Right ventricle myocardium inferior (tissue), 1 donor: ENCODE measurements at regions of chr1 and their contacts with region 1.

Region 1: DNA sequence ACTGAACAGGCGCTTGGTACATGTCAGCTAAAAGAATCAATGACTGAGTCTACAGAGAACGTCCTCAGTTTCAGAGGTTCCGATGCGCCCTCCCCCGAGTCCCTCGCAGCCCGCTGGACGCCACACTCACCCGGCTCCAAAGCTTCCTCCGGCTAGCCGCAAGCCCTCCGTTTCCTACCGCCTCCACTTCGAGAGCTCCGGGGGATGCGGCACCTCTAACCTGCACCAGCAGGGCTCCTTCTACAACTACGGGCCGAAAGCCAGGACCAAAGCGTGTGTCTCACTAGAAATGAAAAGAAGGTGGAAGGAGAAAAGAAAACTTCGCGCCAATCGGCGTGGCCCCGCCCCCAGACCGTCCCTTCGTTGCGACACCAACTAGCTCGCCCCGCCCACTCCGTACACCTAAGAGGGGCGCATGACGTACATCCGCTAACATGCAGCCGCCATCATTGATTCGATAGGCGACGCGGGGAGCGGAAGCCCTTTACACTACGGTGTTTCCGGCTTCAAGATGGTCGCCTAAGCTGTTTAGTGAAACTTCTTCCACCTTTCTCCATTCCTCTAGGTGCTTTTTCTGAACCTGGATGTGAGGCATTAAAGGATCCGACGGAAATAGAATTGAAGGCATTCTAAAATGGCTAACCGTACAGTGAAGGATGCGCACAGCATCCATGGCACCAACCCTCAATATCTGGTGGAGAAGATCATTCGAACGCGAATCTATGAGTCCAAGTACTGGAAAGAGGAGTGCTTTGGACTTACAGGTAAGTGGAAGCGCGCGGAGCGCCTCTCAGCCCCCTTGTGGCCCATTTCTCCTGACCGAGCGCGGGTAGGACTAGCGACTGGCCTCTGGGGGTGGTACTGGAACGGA is at the starts of genes ORC1 and PRPF38A:
- DNase-seq: peak; percentile 99
- ATAC-seq: peak; percentile 100
- total RNA-seq, gene ORC1: 0.46 TPM
- total RNA-seq, gene PRPF38A: 18.9 TPM

Region 2: DNA sequence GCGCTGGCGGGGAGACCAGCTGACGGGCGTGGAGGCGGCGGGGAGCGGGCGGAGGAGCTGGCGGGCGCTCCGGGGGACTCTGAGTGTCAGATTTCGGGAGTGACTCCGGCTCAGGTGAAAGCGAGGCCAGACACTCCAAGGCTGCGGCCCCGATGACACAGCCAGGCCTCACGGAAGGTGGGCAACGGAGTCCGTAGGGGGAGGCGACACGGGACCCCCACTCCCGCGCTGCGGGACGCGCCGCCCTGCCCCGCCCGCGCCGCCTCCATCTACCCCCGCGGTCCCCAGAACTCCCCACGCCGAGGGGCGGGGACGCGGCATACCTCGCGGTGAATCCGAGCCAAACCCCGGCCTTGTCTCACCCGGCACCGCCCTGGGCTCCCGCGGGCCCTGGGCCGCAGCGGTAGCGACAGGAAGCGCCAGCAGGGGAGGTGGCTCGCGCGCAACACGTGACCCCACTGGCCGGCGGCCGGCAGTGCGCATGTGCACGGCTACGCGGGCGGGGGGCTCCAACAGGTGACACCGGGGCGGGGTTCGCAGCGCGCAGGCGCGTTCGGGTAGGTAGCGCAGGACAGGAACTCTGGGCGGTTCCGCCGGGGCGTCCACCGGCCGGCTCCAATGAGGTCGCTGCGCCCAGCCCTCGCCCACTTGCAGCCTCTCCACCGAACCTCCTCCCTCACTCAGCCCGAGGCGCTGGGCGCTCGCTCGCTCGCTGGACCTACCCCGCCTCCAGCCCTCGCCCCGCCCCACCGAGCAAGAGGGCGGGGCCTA is 38.4 kb before region 1 on chr1 and contains the start of gene CC2D1B:
- intact Hi-C with region 1: loop called (anchors 2 kb)
- DNase-seq: peak; percentile 99
- ATAC-seq: peak; percentile 96
- total RNA-seq, gene CC2D1B: 14.1 TPM

Region 3: DNA sequence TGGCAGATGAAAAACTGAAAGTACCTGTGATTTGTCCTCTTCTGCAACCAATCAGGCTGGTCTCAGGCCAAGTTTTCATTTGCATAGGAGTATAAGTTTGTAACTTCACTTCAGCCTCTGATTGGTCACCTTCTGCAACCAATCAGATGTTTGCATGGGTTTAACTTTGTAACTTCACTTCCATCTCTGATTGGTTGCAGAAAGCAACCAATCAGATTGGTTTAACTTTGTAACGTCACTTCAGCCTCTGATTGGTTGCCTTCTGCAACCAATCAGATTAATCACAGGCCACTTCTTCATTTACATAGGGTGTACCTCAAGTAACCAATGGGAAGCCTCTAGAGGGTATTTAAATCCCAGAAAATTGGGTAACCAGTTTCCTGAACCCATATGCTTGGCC is 167.4 kb after region 1 on chr1:
- intact Hi-C with region 1: no loop called
- DNase-seq: no peak
- ATAC-seq: no peak

Region 4: DNA sequence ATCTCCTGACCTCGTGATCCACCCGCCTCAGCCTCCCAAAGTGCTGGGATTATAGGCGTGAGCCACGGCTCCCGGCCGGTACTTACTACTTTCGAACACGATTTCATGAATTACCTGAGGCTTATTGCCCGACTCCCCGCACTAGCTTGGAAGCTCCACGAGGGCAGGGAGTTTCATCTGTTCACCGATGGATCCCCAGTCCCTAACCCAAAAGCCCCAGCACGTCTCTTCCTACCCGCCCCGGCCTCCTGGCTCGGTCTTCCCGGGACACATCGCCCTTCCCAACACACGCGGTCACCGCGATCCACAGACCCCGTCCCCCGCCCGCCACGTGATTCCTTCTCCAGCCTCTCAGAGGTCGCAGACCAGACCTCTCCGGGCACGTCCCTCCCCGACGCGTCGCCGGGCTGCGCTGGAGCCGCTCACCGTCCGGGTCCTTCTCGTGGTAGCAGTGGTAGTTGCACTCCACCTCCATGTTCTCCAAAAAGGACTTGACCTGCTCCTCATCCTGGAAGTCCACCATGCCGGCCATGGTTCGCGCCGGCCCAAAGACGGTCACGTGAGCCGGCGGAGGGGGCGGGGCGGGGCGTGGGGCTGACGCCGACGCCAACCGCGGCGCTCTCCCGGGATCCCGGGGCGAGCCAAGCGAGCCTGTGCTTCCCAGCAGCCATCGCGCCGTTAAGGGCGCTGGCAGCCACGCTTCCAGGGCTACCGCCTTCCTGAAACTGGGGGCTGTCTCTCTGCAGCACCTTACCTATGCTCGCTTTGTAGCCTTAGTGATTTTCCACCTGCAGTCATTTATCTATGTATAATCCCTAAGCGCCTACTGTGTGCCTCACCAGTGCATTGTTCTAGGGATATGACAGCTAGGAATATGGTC is 293.7 kb after region 1 on chr1 and contains the start of gene COA7:
- intact Hi-C with region 1: loop called (anchors 10 kb)
- DNase-seq: peak; percentile 93
- ATAC-seq: peak; percentile 91
- total RNA-seq, gene COA7: 21.6 TPM